Naive thymus-derived CD4-positive, alpha-beta T cell (primary cell): ENCODE measurements at regions of chr2 and their contacts with region 1.

Region 1: GRCh38 chr2:96265840-96266679 is at the starts of genes CIAO1 and TMEM127:
- DNase-seq: peak; percentile 96 to 99 (median 97)
- ATAC-seq: peak; percentile 97
- H3K4me3 ChIP-seq: peak within 1 kb of the TSS; percentile 86
- H3K4me3 Mint-ChIP-seq: peak within 1 kb of the TSS; percentile 86 to 100 (median 96)
- H3K27ac ChIP-seq: peak within 1 kb of the TSS; percentile 96
- H3K27ac Mint-ChIP-seq: peak within 1 kb of the TSS; percentile 87 to 97 (median 96)
- H3K4me1 ChIP-seq: peaks cover 31 to 37% of the 10 kb centered on the region in 2 donors
- H3K4me1 Mint-ChIP-seq: peaks cover 38 to 61% (median 46%) of the 10 kb centered on the region in 7 donors
- H3K27me3 ChIP-seq: no peaks in the 10 kb centered on the region
- H3K27me3 Mint-ChIP-seq: no peaks in the 10 kb centered on the region
- total RNA-seq, gene CIAO1: 62.1 to 85.3 (median 71.6) TPM
- total RNA-seq, gene TMEM127: 33.7 to 69.0 (median 40.4) TPM

Region 2: GRCh38 chr2:96138179-96139145 is 127.6 kb before region 1 on chr2 and contains the start of gene ASTL:
- CTCF ChIA-PET with region 1: interaction called, 5 read pairs
- POLR2A ChIA-PET with region 1: interaction called, 3 read pairs
- intact Hi-C with region 1: loop called in 1 of 2 experiments (anchors 2 kb)
- DNase-seq: peak in 8 of 9 donors; percentile 56 to 78 (median 73)
- ATAC-seq: peak; percentile 68
- H3K4me3 ChIP-seq: no peak within 1 kb of the TSS
- H3K4me3 Mint-ChIP-seq: no peak within 1 kb of the TSS
- H3K27ac ChIP-seq: no peak within 1 kb of the TSS
- H3K27ac Mint-ChIP-seq: peak within 1 kb of the TSS in 7 of 9 donors; percentile 25 to 70 (median 56)
- H3K4me1 ChIP-seq: peaks cover 18 to 20% of the 10 kb centered on the region in 2 donors
- H3K4me1 Mint-ChIP-seq: peaks cover 8 to 28% (median 17%) of the 10 kb centered on the region in 7 donors
- H3K27me3 ChIP-seq: no peaks in the 10 kb centered on the region
- H3K27me3 Mint-ChIP-seq: no peaks in the 10 kb centered on the region
- total RNA-seq, gene ASTL: 0.65 to 7.5 (median 0.86) TPM

Region 3: GRCh38 chr2:96241900-96242611 is 24.0 kb before region 1 on chr2:
- CTCF ChIA-PET with region 1: no interaction called
- POLR2A ChIA-PET with region 1: interaction called, 7 read pairs
- intact Hi-C with region 1: loop called (anchors 1 to 2 kb)
- DNase-seq: peak in 8 of 9 donors; percentile 17 to 57 (median 42)
- ATAC-seq: peak; percentile 89
- H3K4me3 ChIP-seq: peak overlapping the region; percentile 43
- H3K4me3 Mint-ChIP-seq: peak overlapping the region; percentile 53 to 79 (median 68)
- H3K27ac ChIP-seq: peak overlapping the region; percentile 67
- H3K27ac Mint-ChIP-seq: peak overlapping the region; percentile 91 to 96 (median 94)
- H3K4me1 ChIP-seq: peaks cover 24 to 30% of the 10 kb centered on the region in 2 donors
- H3K4me1 Mint-ChIP-seq: peaks cover 26 to 57% (median 52%) of the 10 kb centered on the region in 7 donors
- H3K27me3 ChIP-seq: no peaks in the 10 kb centered on the region
- H3K27me3 Mint-ChIP-seq: no peaks in the 10 kb centered on the region

Region 4: GRCh38 chr2:96320728-96321622 is 54.9 kb after region 1 on chr2:
- CTCF ChIA-PET with region 1: no interaction called
- POLR2A ChIA-PET with region 1: interaction called, 5 read pairs
- intact Hi-C with region 1: loop called (anchors 1 kb)
- DNase-seq: peak in 3 of 9 donors; percentile 13 to 62 (median 19)
- ATAC-seq: peak; percentile 28
- H3K4me3 ChIP-seq: peak overlapping the region; percentile 82
- H3K4me3 Mint-ChIP-seq: peak overlapping the region; percentile 86 to 95 (median 91)
- H3K27ac ChIP-seq: peak overlapping the region; percentile 53
- H3K27ac Mint-ChIP-seq: peak overlapping the region in 7 of 9 donors; percentile 6 to 89 (median 62)
- H3K4me1 ChIP-seq: peaks cover 21 to 42% of the 10 kb centered on the region in 2 donors
- H3K4me1 Mint-ChIP-seq: peaks cover 7 to 67% (median 33%) of the 10 kb centered on the region in 7 donors
- H3K27me3 ChIP-seq: no peaks in the 10 kb centered on the region
- H3K27me3 Mint-ChIP-seq: peaks cover 0 to 7% (median 0%) of the 10 kb centered on the region in 5 donors

Region 5: GRCh38 chr2:96374211-96374951 is 108.3 kb after region 1 on chr2:
- CTCF ChIA-PET with region 1: no interaction called
- POLR2A ChIA-PET with region 1: no interaction called
- intact Hi-C with region 1: no loop called
- DNase-seq: no peak
- ATAC-seq: no peak
- H3K4me3 ChIP-seq: no peak overlapping the region
- H3K4me3 Mint-ChIP-seq: no peak overlapping the region
- H3K27ac ChIP-seq: no peak overlapping the region
- H3K27ac Mint-ChIP-seq: no peak overlapping the region
- H3K4me1 ChIP-seq: no peaks in the 10 kb centered on the region
- H3K4me1 Mint-ChIP-seq: no peaks in the 10 kb centered on the region
- H3K27me3 ChIP-seq: no peaks in the 10 kb centered on the region
- H3K27me3 Mint-ChIP-seq: no peaks in the 10 kb centered on the region

Region 6: GRCh38 chr2:96449637-96450036 is 183.6 kb after region 1 on chr2:
- CTCF ChIA-PET with region 1: no interaction called
- POLR2A ChIA-PET with region 1: no interaction called
- intact Hi-C with region 1: no loop called
- DNase-seq: no peak
- ATAC-seq: no peak
- H3K4me3 ChIP-seq: no peak overlapping the region
- H3K4me3 Mint-ChIP-seq: no peak overlapping the region
- H3K27ac ChIP-seq: no peak overlapping the region
- H3K27ac Mint-ChIP-seq: no peak overlapping the region
- H3K4me1 ChIP-seq: no peaks in the 10 kb centered on the region
- H3K4me1 Mint-ChIP-seq: peaks cover 0 to 1% (median 0%) of the 10 kb centered on the region in 7 donors
- H3K27me3 ChIP-seq: no peaks in the 10 kb centered on the region
- H3K27me3 Mint-ChIP-seq: peaks cover 0 to 5% (median 0%) of the 10 kb centered on the region in 5 donors

Region 7: DNA sequence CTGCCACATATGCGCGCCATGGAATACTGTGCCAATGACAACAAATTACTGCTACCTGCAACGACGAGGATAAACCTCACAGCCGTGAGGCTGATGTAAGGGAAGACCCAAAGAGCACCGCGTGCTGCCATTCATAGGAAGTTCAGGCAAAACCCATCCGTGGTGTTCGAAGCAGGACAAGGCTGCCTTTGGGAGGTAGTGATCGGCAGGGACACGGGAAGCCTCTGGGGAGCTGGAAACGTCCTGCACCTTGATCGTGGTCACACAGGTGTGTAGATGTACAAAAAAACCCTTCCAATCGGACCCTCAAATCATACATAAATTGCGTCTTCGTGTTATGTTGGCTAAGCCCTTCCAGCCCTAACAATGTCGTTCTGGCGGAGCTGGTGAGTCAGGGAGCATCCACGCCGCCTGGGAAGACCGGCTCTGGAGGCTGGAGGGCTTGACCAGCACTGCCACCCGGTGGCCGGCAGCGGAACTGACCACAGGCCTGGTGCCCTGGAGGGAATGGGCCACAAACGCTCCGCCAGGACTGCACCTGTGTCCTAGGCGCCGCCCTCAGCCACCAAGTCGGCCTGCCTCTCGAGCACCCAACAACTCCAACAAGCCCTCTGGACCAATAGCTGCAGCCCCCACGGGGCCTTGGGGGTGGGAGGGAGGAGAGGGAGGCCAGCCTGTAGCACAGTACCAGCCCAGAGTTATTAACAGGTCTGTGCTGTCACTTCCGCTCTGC is 243.2 kb after region 1 on chr2:
- CTCF ChIA-PET with region 1: no interaction called
- POLR2A ChIA-PET with region 1: no interaction called
- intact Hi-C with region 1: loop called in 1 of 2 experiments (anchors 1 kb)
- DNase-seq: peak in 4 of 9 donors; percentile 32 to 79 (median 44)
- ATAC-seq: peak; percentile 64
- H3K4me3 ChIP-seq: no peak overlapping the region
- H3K4me3 Mint-ChIP-seq: peak overlapping the region in 7 of 10 donors; percentile 3 to 66 (median 40)
- H3K27ac ChIP-seq: no peak overlapping the region
- H3K27ac Mint-ChIP-seq: peak overlapping the region in 5 of 9 donors; percentile 28 to 74 (median 66)
- H3K4me1 ChIP-seq: peaks cover 3 to 4% of the 10 kb centered on the region in 2 donors
- H3K4me1 Mint-ChIP-seq: peaks cover 8 to 51% (median 13%) of the 10 kb centered on the region in 7 donors
- H3K27me3 ChIP-seq: no peaks in the 10 kb centered on the region
- H3K27me3 Mint-ChIP-seq: peaks cover 3 to 25% (median 17%) of the 10 kb centered on the region in 5 donors

Region 8: GRCh38 chr2:96816128-96816835 is 550.2 kb after region 1 on chr2 and contains the start of gene CNNM3:
- CTCF ChIA-PET with region 1: no interaction called
- POLR2A ChIA-PET with region 1: no interaction called
- intact Hi-C with region 1: loop called in 1 of 2 experiments (anchors 5 kb)
- DNase-seq: peak; percentile 89 to 99 (median 93)
- ATAC-seq: peak; percentile 96
- H3K4me3 ChIP-seq: peak within 1 kb of the TSS; percentile 74
- H3K4me3 Mint-ChIP-seq: peak within 1 kb of the TSS; percentile 86 to 96 (median 92)
- H3K27ac ChIP-seq: peak within 1 kb of the TSS; percentile 79
- H3K27ac Mint-ChIP-seq: peak within 1 kb of the TSS; percentile 75 to 96 (median 86)
- H3K4me1 ChIP-seq: peaks cover 37 to 43% of the 10 kb centered on the region in 2 donors
- H3K4me1 Mint-ChIP-seq: peaks cover 36 to 62% (median 58%) of the 10 kb centered on the region in 7 donors
- H3K27me3 ChIP-seq: no peaks in the 10 kb centered on the region
- H3K27me3 Mint-ChIP-seq: no peaks in the 10 kb centered on the region
- total RNA-seq, gene CNNM3: 32.1 to 51.5 (median 44.6) TPM

Region 9: GRCh38 chr2:96832754-96833507 is 566.9 kb after region 1 on chr2:
- CTCF ChIA-PET with region 1: no interaction called
- POLR2A ChIA-PET with region 1: no interaction called
- intact Hi-C with region 1: no loop called
- DNase-seq: no peak
- ATAC-seq: no peak
- H3K4me3 ChIP-seq: no peak overlapping the region
- H3K4me3 Mint-ChIP-seq: no peak overlapping the region
- H3K27ac ChIP-seq: no peak overlapping the region
- H3K27ac Mint-ChIP-seq: peak overlapping the region in 4 of 9 donors; percentile 25 to 62 (median 42)
- H3K4me1 ChIP-seq: no peaks in the 10 kb centered on the region
- H3K4me1 Mint-ChIP-seq: peaks cover 0 to 3% (median under 1%) of the 10 kb centered on the region in 7 donors
- H3K27me3 ChIP-seq: no peaks in the 10 kb centered on the region
- H3K27me3 Mint-ChIP-seq: no peaks in the 10 kb centered on the region